ENCODE measurements at regions of chr19 and their contacts with region 1.

Region 1: GRCh38 chr19:4120531-4120930 is 3.4 kb downstream of the MAP2K2 start:
- DNase-seq: no peak
- H3K27ac ChIP-seq: peak overlapping the region; percentile 50
- CTCF ChIP-seq: no peak

Region 2: GRCh38 chr19:4139614-4140236 is 19.2 kb after region 1 on chr19:
- CTCF ChIA-PET with region 1: interaction called, 12 read pairs
- POLR2A ChIA-PET with region 1: no interaction called
- DNase-seq: peak; percentile 72
- H3K27ac ChIP-seq: peak overlapping the region; percentile 11
- CTCF ChIP-seq: peak; percentile 70